Heart right ventricle (tissue), 16 donors: ENCODE measurements at regions of chr2 and their contacts with region 1.

Region 1: DNA sequence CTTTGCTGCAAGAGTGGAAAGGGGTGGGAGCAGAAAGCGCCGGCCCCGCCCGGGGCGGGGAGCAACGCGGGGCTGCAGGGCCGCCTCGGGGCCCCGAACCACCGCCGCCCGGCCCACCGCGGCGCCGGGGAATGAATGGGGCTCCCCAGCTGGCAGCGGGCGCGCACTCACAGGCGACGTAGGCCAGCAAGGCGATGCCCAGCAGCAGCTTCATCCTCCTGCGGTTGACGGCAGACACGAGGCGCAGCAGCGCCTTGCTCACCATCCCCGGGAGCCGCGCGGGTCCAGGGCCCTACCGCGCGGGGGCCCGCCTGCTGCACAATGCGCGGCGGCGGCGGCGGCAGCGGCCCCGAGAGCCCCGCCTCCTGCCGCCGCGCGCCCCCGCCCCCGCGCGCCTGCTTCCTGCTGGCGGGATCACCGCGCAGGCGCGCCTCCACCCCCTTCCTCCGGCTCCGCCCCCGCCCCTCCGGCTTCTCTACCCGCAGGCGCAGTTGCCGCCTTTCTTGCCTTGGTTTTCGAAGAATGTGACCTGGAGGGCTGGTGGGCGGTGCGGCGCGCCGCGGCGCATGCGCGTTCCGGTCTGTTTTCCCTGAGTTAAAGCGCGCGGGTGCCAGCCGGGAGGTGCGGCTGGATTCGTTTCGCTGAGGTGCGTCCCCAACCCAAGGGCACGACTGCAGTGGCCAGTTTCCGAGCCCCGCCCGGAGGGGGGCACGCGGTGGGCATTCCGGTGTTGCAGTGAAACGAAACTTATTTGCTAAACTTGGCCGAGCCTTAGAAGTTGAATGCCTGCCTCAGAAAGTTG is at the start of gene UXS1:
- DNase-seq: peak; percentile 97 to 99
- ATAC-seq: peak; percentile 92 to 99 (median 97)
- H3K4me3 ChIP-seq: peak within 1 kb of the TSS; percentile 73 to 98 (median 95)
- H3K27ac ChIP-seq: peak within 1 kb of the TSS; percentile 49 to 94 (median 88)
- H3K4me1 ChIP-seq: peaks cover 2 to 45% (median 17%) of the 10 kb centered on the region in 9 donors
- H3K27me3 ChIP-seq: no peaks in the 10 kb centered on the region
- CTCF ChIP-seq: no peak
- total RNA-seq, gene UXS1: 22.0 to 35.0 (median 25.9) TPM

Region 2: DNA sequence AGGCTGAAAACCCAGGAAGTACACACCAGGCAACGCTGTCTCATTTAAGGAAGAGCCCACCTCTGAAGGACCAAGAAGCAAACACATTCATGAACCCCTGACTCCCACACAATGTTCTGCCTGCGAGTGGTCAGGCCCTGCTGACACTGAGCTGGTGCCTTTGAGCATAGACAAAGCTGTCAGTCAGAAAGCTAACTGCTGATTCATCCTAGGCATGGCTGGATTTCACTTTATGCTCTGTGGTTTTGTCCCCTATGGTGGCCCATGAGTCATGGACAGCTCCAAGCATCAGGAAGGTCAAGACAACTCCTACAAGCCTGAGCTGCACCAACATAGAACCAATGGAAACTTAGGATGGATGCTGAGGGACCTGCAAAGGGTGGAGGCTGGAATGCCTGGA is 78.9 kb before region 1 on chr2:
- intact Hi-C with region 1: loop called in 3 of 10 experiments (anchors 5 to 10 kb)
- DNase-seq: no peak
- ATAC-seq: peak in 1 of 8 donors; percentile 13
- H3K4me3 ChIP-seq: no peak overlapping the region
- H3K27ac ChIP-seq: no peak overlapping the region
- H3K4me1 ChIP-seq: peaks cover 0 to 21% (median 12%) of the 10 kb centered on the region in 9 donors
- H3K27me3 ChIP-seq: no peaks in the 10 kb centered on the region
- CTCF ChIP-seq: no peak

Region 3: DNA sequence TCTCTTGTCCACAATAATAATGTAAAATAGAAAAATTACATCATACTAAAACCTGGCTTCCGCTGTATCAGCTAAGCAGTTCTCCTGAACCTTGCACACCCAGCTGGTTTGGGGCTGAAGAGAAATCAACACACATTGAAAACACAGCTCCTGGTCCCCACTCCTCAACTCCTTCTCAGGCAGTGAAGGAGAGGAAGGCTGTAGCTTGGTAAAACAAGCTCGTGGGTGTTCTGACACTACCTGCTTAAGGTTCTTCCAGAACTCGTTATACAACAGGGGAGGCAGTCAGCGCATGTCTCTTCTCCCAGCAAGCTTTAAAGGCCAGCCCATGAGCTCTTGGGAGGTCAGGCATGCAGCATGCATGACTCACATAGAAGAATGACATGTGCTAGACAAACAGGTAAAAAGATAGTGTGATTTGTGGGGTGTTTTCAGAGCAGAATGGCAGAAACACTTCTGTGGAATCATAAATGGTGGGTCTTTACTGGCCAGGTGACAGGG is 69.2 kb before region 1 on chr2:
- intact Hi-C with region 1: loop called in 2 of 10 experiments (anchors 5 kb)
- DNase-seq: no peak
- ATAC-seq: no peak
- H3K4me3 ChIP-seq: no peak overlapping the region
- H3K27ac ChIP-seq: no peak overlapping the region
- H3K4me1 ChIP-seq: peaks cover 0 to 3% (median 0%) of the 10 kb centered on the region in 9 donors
- H3K27me3 ChIP-seq: no peaks in the 10 kb centered on the region
- CTCF ChIP-seq: no peak